ENCODE measurements at regions of chr20 and their contacts with region 1.

Region 1: GRCh38 chr20:324177-325044 is 941 bp upstream of the SOX12 start:
- DNase-seq: peak; percentile 86 to 99 (median 93)
- ATAC-seq: peak; percentile 81
- H3K4me3 ChIP-seq: peak overlapping the region; percentile 57 to 67
- H3K27ac ChIP-seq: peak overlapping the region; percentile 87 to 92
- H3K4me1 ChIP-seq: peaks cover 12 to 34% of the 10 kb centered on the region in 2 donors
- H3K27me3 ChIP-seq: peaks cover 0 to 20% of the 10 kb centered on the region in 2 donors
- CTCF ChIP-seq: peak in 1 of 2 donors; percentile 10

Region 2: DNA sequence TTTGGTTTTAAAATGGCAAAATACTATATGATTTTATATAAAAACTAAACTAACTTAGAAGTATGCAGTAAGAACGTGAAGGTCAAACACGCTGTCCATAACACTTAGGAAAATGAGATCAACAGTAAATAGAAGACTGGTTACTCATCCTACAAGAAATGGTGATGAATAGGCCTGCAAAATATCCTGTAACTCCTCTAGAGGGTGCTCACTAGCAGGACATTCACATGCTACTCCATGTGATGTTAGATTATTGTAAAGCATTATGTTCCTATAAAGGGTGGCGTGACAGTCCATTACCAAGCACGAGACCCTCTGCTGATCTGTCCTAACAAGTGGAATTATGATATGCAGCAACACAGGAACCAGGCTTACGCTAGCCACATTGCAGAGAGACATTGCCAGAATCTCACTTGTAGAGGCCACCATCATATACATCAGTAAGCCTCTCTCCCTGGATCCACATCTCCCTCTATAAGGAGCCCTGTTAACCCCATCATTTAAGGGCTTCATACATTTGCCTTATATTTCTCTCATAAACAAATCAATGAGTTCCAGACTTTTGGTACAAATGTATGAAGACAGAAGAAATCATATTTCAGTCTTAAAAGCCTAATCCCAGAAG is 115.4 kb before region 1 on chr20:
- intact Hi-C with region 1: loop called in 1 of 2 experiments (anchors 10 kb)
- DNase-seq: peak in 2 of 4 donors; percentile 20 to 57
- ATAC-seq: peak; percentile 89
- H3K4me3 ChIP-seq: no peak overlapping the region
- H3K27ac ChIP-seq: no peak overlapping the region
- H3K4me1 ChIP-seq: no peaks in the 10 kb centered on the region
- H3K27me3 ChIP-seq: peaks cover 0 to 8% of the 10 kb centered on the region in 2 donors
- CTCF ChIP-seq: peak; percentile 34 to 45

Region 3: GRCh38 chr20:341682-342081 is 17.3 kb after region 1 on chr20:
- intact Hi-C with region 1: loop called in 1 of 2 experiments (anchors 2 kb)
- DNase-seq: no peak
- ATAC-seq: peak; percentile 9
- H3K4me3 ChIP-seq: no peak overlapping the region
- H3K27ac ChIP-seq: no peak overlapping the region
- H3K4me1 ChIP-seq: peaks cover 4 to 9% of the 10 kb centered on the region in 2 donors
- H3K27me3 ChIP-seq: peaks cover 0 to 6% of the 10 kb centered on the region in 2 donors
- CTCF ChIP-seq: no peak